H1 (cell line): ENCODE measurements at regions of chr17 and their contacts with region 1.

Region 1: GRCh38 chr17:10618202-10618635 is 38.9 kb downstream of the MYH3 start:
- DNase-seq: peak; percentile 51 to 79
- H3K4me3 ChIP-seq: no peak overlapping the region
- H3K27ac ChIP-seq: no peak overlapping the region
- H3K4me1 ChIP-seq: no peaks in the 10 kb centered on the region; a peak in 2 of 7 replicates
- H3K27me3 ChIP-seq: no peaks in the 10 kb centered on the region
- CTCF ChIP-seq: peak; percentile 95 to 97 (median 95)
- EP300 ChIP-seq: no peak
- POLR2A ChIP-seq: no peak
- RAD21 ChIP-seq: peak; percentile 94 to 95

Region 2: DNA sequence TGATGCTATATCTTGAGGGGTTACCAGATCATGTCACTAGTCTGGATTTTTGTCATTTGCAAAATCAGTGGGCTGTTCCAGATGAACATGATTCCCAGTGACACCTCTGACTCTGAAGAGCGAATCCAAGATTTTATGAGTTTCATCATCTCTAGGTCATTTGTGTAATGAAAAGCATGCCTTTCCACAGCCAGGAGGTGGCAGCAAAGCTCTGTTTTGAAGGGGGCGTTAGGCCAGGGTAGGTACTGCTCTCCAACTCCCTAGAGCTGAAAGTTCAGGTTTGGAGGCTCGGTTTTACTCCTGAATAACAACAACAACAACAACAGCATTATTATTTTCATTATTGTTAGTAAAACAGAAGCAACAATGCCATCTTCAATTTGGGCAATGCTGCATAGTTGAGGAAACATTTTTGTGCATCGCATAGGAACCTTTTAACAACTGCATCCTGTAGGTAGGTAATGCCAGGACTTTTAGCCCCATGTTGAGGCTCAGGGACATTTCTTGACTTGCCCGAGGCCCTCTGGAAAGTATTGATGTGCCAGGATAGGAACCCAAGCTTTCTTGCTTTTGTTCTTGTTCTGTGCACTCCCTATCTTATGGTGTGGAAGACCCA is 322.4 kb before region 1 on chr17:
- CTCF ChIA-PET with region 1: interaction called, 60 read pairs
- POLR2A ChIA-PET with region 1: no interaction called
- DNase-seq: peak; percentile 44 to 81
- H3K4me3 ChIP-seq: no peak overlapping the region
- H3K27ac ChIP-seq: no peak overlapping the region
- H3K4me1 ChIP-seq: peaks cover 0 to 2% (median 1%) of the 10 kb centered on the region in 4 experiments; a peak in 2 of 7 replicates
- H3K27me3 ChIP-seq: no peaks in the 10 kb centered on the region
- CTCF ChIP-seq: peak; percentile 64 to 93 (median 92)
- EP300 ChIP-seq: no peak
- POLR2A ChIP-seq: no peak
- RAD21 ChIP-seq: peak; percentile 92 to 95

Region 3: GRCh38 chr17:10337976-10338375 is 280.2 kb before region 1 on chr17:
- CTCF ChIA-PET with region 1: interaction called, 343 read pairs
- POLR2A ChIA-PET with region 1: interaction called, 3 read pairs
- DNase-seq: no peak
- H3K4me3 ChIP-seq: no peak overlapping the region
- H3K27ac ChIP-seq: no peak overlapping the region
- H3K4me1 ChIP-seq: peaks cover 0 to 4% (median 2%) of the 10 kb centered on the region in 4 experiments; a peak in 3 of 7 replicates
- H3K27me3 ChIP-seq: no peaks in the 10 kb centered on the region
- CTCF ChIP-seq: no peak
- EP300 ChIP-seq: no peak
- POLR2A ChIP-seq: no peak
- RAD21 ChIP-seq: no peak

Region 4: GRCh38 chr17:10398352-10398751 is 219.9 kb before region 1 on chr17:
- CTCF ChIA-PET with region 1: interaction called, 15 read pairs
- POLR2A ChIA-PET with region 1: no interaction called
- DNase-seq: peak; percentile 9 to 67
- H3K4me3 ChIP-seq: no peak overlapping the region
- H3K27ac ChIP-seq: no peak overlapping the region
- H3K4me1 ChIP-seq: no peaks in the 10 kb centered on the region
- H3K27me3 ChIP-seq: no peaks in the 10 kb centered on the region
- CTCF ChIP-seq: peak; percentile 63 to 81 (median 75)
- EP300 ChIP-seq: no peak
- POLR2A ChIP-seq: no peak
- RAD21 ChIP-seq: peak; percentile 39 to 55; a peak in 3 of 4 replicates

Region 5: DNA sequence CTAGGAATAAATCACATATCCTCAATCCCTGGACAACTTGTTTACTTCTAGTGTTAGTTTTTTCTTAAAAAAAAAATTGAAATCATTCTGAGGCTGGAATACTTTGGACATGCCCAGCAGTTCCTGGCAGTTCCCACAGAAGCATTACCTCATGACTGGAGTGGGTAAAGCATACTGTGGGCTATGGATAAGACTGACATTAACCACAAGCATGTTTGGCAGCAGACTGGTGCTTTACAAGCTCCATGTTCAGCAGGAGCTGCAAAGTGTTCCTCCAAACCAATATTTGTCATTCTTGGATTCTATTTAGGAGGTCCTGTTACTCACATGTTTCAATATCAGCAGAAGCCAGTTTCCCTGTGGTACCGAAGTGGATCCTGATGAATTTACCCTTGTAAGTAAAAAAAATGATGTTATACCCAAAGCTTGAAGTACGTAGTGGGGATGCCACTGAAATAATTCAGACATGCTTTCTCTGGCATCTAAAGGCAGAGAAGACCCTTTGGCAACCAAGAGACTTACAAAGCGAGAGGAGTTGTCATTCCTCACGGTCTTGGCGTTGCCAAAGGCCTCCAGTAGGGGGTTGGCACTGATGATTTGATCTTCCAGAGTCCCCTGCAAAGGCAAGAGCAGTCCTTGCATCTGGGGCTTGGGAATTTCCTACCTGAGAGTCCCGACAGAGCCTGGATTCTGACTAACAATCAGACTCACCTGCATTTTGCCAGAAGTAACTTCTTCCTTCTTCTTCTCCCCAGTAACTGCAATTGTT is 104.7 kb before region 1 on chr17:
- CTCF ChIA-PET with region 1: interaction called, 15 read pairs
- POLR2A ChIA-PET with region 1: no interaction called
- DNase-seq: no peak
- H3K4me3 ChIP-seq: no peak overlapping the region
- H3K27ac ChIP-seq: no peak overlapping the region
- H3K4me1 ChIP-seq: 0 out of 7 replicates have a peak, but pooled peaks cover 0 to 2% (median under 1%) of the 10 kb centered on the region in 4 experiments
- H3K27me3 ChIP-seq: no peaks in the 10 kb centered on the region
- CTCF ChIP-seq: peak in 1 of 3 experiments; percentile 43; a peak in 1 of 4 replicates
- EP300 ChIP-seq: no peak
- POLR2A ChIP-seq: no peak
- RAD21 ChIP-seq: peak in 1 of 2 experiments; percentile 10; a peak in 1 of 4 replicates

Region 6: DNA sequence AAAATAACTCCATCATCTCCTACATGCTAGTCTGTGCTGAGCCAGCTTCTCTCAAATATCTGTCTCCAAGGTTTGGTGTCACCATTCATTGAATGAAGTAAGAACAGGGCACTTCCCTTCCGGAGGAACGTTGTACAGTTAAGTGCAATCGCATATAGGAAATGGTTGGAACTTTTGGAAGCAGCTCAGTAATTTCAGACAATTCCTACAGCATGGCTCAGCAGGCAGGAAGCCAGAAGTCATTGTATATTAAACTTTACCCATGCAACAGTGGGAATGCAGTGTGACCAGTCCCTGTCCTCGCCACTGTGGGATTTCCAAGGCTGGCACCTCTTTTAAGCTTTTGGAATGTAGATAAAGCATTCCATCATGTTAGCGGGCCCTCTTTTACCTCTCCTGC is 17.6 kb before region 1 on chr17:
- CTCF ChIA-PET with region 1: interaction called, 13 read pairs
- POLR2A ChIA-PET with region 1: no interaction called
- DNase-seq: no peak
- H3K4me3 ChIP-seq: no peak overlapping the region
- H3K27ac ChIP-seq: no peak overlapping the region
- H3K4me1 ChIP-seq: peaks cover 0 to 5% (median 0%) of the 10 kb centered on the region in 4 experiments; a peak in 1 of 7 replicates
- H3K27me3 ChIP-seq: no peaks in the 10 kb centered on the region
- CTCF ChIP-seq: no peak
- EP300 ChIP-seq: no peak
- POLR2A ChIP-seq: no peak
- RAD21 ChIP-seq: no peak